Activated CD4-positive, alpha-beta memory T cell treated with anti-CD3 and anti-CD28 coated beads for 36 hours (primary cell): ENCODE measurements at regions of chr2 and their contacts with region 1.

Region 1: DNA sequence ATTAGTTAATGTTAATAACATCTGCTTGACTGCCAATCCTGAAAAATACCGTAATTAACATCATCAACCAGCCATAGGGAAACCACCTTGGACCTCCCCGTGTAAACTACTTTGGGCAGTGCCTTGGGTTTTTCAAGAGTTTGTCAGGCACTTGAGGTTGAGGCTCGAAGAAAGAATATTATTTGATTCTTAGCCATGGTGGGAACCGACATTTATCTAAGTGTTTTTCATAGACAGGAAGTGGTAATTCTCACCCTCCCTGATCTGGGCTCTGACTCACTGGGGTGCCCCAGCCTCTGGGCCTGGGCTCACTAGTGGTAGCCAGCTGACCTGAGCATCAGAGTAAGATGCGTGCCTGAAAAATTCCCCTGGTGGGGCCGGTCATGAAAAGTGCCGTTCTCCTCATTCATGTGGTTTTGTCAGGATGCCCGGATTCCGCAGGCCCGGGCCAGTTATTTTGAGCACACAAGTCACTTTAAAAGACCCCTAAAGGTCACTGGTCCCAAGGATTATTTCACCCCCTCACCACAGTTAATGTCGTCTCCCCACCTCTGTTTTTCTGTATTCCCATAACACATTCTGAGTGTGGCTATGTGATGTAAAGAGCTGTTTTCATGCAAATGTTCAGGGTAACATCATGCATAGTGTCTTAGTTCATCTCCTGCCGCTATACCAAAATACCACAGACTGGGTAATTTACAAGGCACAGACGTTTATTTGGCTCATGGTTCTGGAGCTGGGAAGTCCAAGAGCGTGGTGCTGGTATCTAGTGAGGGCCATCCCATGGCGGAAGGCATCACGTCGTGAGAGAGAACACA is 21.6 kb upstream of the SPATA3 start:
- DNase-seq: peak; percentile 87
- H3K4me3 Mint-ChIP-seq: peak overlapping the region; percentile 17
- H3K27ac Mint-ChIP-seq: peak overlapping the region; percentile 85
- H3K4me1 Mint-ChIP-seq: peaks cover 54% of the 10 kb centered on the region
- H3K27me3 Mint-ChIP-seq: peaks cover 15% of the 10 kb centered on the region

Region 2: GRCh38 chr2:230902180-230902899 is 72.0 kb before region 1 on chr2:
- CTCF ChIA-PET with region 1: interaction called, 6 read pairs
- POLR2A ChIA-PET with region 1: no interaction called
- intact Hi-C with region 1: loop called (anchors 1 kb)
- DNase-seq: peak; percentile 72
- H3K4me3 Mint-ChIP-seq: no peak overlapping the region
- H3K27ac Mint-ChIP-seq: no peak overlapping the region
- H3K4me1 Mint-ChIP-seq: peaks cover 49% of the 10 kb centered on the region
- H3K27me3 Mint-ChIP-seq: peaks cover 21% of the 10 kb centered on the region

Region 3: DNA sequence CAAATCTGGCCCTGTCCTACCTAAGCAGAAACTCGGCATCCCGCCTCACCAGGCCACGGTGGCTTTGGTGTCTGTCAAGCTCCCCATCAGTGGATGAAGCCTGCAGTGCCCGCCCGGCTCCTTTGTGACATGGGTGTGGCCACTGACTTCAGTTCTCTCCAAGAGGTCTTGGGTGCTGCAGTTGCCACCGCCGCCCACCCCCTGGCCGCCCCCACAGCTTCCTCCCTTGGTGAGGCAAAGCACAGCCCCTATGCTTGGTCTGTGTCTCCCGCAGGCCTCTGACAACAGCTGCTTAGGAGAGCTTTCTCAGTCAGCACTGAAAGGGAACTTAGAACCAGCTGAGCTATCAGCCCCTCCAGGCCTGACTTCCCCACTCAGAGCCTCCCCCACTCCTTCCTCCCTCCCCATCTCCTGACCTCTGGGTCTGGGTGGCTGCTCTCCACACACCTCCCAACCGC is 26.4 kb before region 1 on chr2:
- CTCF ChIA-PET with region 1: interaction called, 4 read pairs
- POLR2A ChIA-PET with region 1: no interaction called
- intact Hi-C with region 1: loop called (anchors 1 kb)
- DNase-seq: no peak
- H3K4me3 Mint-ChIP-seq: no peak overlapping the region
- H3K27ac Mint-ChIP-seq: no peak overlapping the region
- H3K4me1 Mint-ChIP-seq: peaks cover 50% of the 10 kb centered on the region
- H3K27me3 Mint-ChIP-seq: peaks cover 19% of the 10 kb centered on the region

Region 4: DNA sequence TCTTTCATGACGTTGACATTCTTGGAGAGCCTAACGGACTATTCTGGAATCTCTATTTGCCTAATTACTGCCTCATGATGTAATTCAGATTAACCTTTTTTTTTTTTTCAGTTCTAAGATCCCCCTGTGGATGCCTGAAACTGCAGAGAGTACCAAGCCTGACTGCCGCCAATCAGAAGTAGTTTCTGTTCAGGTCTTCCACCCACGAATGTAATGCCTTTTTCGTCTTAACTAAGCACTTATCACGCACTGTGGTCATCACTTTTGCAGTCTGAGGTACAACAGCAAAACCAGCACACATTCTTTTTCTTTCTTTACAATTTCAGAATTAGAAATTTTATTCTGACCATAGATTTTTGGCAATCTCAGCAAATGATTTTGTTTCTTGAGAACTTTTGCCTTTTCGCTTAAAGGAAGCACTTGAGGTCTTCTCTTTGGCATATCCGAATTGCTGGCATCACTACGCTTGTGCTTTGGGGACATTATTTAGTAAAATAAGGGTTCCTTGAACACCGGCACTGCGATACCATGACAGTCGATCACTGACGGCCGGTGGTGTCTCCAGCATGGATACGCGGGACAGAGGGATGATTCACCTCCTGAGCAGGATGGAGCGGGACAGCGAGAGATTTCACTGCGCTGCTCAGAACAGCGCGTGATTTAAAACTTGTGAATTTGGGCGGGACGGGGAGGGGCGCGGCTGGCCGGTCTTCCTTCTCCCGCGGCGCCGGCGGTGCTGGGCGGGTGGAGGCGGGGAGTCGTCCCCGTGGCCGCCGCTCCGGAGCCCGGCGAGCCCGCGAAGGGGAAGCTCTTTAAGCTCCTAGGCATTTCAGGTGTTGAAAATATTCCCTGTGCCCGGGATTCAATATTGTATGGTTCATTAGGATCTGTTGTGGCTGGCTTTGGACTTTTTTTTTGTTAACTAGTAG is 17.2 kb before region 1 on chr2:
- CTCF ChIA-PET with region 1: interaction called, 3 read pairs
- POLR2A ChIA-PET with region 1: interaction called, 3 read pairs
- intact Hi-C with region 1: loop called (anchors 1 kb)
- DNase-seq: peak; percentile 65
- H3K4me3 Mint-ChIP-seq: peak overlapping the region; percentile 77
- H3K27ac Mint-ChIP-seq: peak overlapping the region; percentile 82
- H3K4me1 Mint-ChIP-seq: peaks cover 46% of the 10 kb centered on the region
- H3K27me3 Mint-ChIP-seq: peaks cover 58% of the 10 kb centered on the region